Ascending aorta (tissue), 2 donors: ENCODE measurements at regions of chr6 and their contacts with region 1.

Region 1: DNA sequence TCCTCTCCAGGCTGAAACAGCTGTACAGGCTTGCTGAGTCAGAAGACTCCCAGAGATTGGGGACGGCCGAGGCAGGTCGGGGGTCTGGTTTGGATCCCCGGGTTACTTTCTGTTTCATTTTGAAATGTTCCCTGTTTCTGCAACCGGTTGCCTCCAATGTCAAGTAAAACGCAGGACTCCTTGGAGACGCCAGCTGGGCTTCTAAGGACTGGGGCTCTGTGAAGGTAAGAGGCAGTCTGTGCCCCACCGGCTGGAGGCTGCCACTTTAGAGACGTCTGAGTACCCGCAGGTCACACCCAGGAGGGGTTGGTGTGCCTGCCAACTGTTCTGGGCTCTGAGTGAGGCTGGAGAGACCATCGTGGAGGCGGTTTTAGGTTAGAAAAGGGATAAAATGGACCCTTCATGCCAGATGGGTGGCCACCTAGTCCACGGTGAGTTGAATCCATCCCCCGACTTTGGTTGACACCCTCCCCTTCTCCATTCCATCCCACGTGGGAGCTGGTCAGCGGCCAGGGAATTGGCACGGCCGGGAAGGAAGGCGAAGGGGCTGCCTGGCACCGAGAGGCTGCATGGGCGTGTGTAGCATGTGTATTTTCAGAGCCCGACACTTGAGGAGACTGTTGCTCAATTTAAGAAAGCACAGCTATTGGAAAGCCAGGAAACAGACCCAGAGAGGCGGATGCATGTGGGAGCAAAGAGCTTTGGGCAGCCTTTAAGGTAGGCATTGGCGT is 240.9 kb downstream of the PHACTR1 start:
- DNase-seq: peak; percentile 52 to 90
- H3K4me3 ChIP-seq: peak overlapping the region; percentile 64 to 70
- H3K27ac ChIP-seq: peak overlapping the region; percentile 66 to 70
- H3K4me1 ChIP-seq: peaks cover 0 to 17% of the 10 kb centered on the region in 2 donors
- H3K27me3 ChIP-seq: no peaks in the 10 kb centered on the region
- CTCF ChIP-seq: peak in 1 of 3 experiments; percentile 15

Region 2: DNA sequence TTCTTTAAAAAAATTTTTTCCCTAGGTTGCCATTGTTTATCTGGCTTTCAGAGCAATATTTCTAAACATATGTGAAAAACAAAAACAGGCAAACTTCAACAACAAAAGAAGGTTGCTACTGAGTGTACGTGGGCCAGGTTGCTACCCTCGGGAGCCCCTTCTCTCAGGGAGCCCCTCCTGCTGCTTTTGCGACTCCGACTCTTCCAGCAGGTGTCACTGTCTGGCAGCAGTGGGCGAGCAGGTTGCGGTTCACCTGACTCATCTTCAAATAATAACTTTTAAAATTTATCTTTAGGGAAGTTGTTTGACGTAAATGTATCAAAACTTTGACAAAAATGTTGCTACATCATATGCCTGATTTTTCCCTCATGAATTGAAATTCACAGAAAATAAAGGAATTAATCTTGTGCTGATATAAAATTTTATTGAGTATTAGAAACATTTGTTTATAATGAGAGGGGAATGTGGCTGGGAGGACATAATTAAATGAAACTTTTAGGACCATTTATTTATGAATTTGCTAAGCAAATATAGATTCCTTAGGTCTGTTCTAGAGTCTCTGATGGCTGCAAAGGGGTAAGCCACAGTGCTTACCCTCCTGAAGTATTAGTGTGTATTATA is 806.6 kb before region 1 on chr6:
- intact Hi-C with region 1: no loop called
- DNase-seq: no peak
- H3K4me3 ChIP-seq: no peak overlapping the region
- H3K27ac ChIP-seq: no peak overlapping the region
- H3K4me1 ChIP-seq: no peaks in the 10 kb centered on the region
- H3K27me3 ChIP-seq: no peaks in the 10 kb centered on the region
- CTCF ChIP-seq: peak in 1 of 3 experiments; percentile 30

Region 3: DNA sequence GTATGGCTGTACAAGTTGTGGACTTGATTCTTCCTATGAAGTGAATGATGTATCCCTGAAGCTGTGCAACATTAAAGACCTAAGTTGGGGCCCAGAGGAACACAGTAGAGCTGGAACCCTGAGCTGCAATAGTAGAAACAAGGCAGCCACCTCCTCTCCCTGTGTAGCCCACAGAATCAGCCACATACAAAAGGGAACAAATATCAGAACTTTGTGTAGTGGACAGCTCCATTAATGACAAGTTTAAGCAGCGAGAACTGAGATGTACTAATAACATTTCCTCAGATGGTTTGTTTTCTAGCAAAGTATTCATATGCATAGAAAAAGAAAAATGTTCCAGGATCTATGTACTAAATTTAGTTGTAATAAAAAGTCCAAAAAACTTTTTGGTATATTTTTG is 221.7 kb before region 1 on chr6:
- intact Hi-C with region 1: no loop called
- DNase-seq: no peak
- H3K4me3 ChIP-seq: no peak overlapping the region
- H3K27ac ChIP-seq: no peak overlapping the region
- H3K4me1 ChIP-seq: no peaks in the 10 kb centered on the region
- H3K27me3 ChIP-seq: no peaks in the 10 kb centered on the region
- CTCF ChIP-seq: no peak

Region 4: GRCh38 chr6:12865671-12866181 is 91.8 kb before region 1 on chr6:
- intact Hi-C with region 1: no loop called
- DNase-seq: no peak
- H3K4me3 ChIP-seq: no peak overlapping the region
- H3K27ac ChIP-seq: no peak overlapping the region
- H3K4me1 ChIP-seq: no peaks in the 10 kb centered on the region
- H3K27me3 ChIP-seq: no peaks in the 10 kb centered on the region
- CTCF ChIP-seq: no peak

Region 5: GRCh38 chr6:12992770-12993169 is 35.3 kb after region 1 on chr6:
- intact Hi-C with region 1: no loop called
- DNase-seq: no peak
- H3K4me3 ChIP-seq: no peak overlapping the region
- H3K27ac ChIP-seq: no peak overlapping the region
- H3K4me1 ChIP-seq: no peaks in the 10 kb centered on the region
- H3K27me3 ChIP-seq: no peaks in the 10 kb centered on the region
- CTCF ChIP-seq: no peak

Region 6: GRCh38 chr6:13099771-13100170 is 142.3 kb after region 1 on chr6:
- intact Hi-C with region 1: loop called (anchors 5 kb)
- DNase-seq: no peak
- H3K4me3 ChIP-seq: no peak overlapping the region
- H3K27ac ChIP-seq: no peak overlapping the region
- H3K4me1 ChIP-seq: peaks cover 3 to 34% of the 10 kb centered on the region in 2 donors
- H3K27me3 ChIP-seq: no peaks in the 10 kb centered on the region
- CTCF ChIP-seq: no peak

Region 7: DNA sequence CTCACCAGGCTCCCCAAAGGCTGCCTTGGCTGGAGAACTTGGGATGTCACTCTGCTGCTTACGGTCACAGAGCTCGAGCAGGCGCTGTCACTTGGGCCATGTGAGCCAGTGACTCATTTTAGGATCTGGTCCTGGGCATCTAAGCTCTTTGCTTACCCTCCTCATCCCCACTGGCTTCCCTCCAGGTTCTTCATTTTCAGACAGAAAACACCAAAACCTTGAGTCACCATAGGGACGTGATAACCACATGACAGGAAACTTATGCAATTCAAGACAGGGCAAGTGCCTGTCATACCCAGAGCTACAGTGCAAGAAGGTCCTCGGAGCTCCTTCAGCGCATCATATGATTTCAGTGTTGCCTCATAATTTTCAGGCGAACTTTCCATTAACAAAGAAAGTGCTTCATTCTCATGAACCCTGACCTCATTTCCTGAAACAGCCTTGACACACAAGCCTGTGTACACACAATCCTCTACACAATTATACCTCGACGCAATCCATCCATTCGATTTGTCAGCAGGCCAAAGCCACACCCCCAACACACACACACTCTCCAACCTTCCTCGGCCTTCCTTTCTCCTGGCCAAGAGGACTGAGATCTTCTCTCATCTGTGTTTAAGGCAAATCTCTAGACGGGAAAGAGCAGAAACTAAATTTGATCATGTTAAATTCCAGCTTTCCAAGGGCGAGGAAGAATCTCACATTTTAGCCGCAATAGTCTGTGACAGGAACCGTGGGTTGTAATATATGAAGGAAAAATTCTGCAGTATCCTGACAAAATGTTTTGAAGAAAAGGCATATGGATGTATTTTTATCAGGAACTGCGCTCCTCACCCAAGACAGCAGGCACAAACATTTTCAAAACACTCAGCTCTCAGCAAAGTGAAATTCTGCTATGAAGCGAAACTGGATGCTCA is 345.5 kb after region 1 on chr6:
- intact Hi-C with region 1: loop called (anchors 5 kb)
- DNase-seq: peak; percentile 61 to 84
- H3K4me3 ChIP-seq: peak overlapping the region; percentile 1 to 29
- H3K27ac ChIP-seq: peak overlapping the region; percentile 39 to 58
- H3K4me1 ChIP-seq: peaks cover 0 to 14% of the 10 kb centered on the region in 2 donors
- H3K27me3 ChIP-seq: no peaks in the 10 kb centered on the region
- CTCF ChIP-seq: no peak

Region 8: DNA sequence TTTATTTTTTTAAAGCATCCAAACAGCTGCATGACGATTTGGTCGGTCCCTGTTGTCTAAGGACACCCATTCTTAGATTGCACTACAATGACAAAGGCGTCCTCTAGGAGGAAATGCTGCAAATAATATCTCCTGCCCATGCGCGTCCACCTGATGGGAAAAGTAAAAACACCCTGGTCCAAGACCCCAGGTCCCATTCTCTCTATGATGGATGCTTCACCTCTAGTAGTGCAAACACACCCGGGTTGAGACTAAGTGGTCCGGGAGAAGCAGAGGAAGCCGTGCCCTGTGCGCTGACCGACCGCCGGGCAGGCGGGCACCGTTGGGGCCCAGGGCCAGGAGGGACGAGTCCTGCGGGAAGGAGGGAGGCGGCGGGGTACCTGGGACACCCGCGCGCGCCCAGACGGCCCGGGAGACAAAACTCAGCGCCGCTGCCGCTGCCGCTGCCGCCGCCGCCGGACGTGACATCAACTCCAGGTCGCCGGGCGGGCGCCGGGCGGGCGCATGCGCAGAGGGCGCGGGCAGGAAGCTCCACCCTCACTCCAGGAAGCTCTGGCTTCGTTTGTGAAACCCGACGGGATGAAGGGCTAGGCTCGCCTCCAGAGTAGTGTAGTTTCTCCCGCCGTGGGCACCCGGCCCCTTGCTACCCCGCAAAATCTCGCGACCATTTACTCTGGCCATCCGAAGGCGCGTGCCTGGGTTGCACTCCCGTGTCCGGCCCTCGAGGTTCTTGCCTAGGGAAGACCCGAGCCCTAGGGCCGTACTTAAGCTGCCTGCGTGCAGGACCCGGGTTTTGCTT is 370.8 kb after region 1 on chr6 and contains the start of gene TBC1D7:
- intact Hi-C with region 1: loop called (anchors 2 kb)
- DNase-seq: peak; percentile 66 to 97
- H3K4me3 ChIP-seq: peak within 1 kb of the TSS; percentile 73 to 92
- H3K27ac ChIP-seq: peak within 1 kb of the TSS; percentile 84 to 96
- H3K4me1 ChIP-seq: peaks cover 2 to 3% of the 10 kb centered on the region in 2 donors
- H3K27me3 ChIP-seq: no peaks in the 10 kb centered on the region
- CTCF ChIP-seq: peak in 2 of 3 experiments; percentile 7 to 35
- total RNA-seq, gene TBC1D7: 79.5 TPM